Mucosa of descending colon (tissue), 3 donors: ENCODE measurements at regions of chr11 and their contacts with region 1.

Region 1: GRCh38 chr11:128172046-128172878 is 415.1 kb downstream of the ETS1 start:
- DNase-seq: peak; percentile 53 to 96 (median 80)
- ATAC-seq: peak; percentile 81
- H3K4me3 ChIP-seq: no peak overlapping the region
- H3K4me1 ChIP-seq: no peaks in the 10 kb centered on the region
- CTCF ChIP-seq: peak; percentile 42

Region 2: DNA sequence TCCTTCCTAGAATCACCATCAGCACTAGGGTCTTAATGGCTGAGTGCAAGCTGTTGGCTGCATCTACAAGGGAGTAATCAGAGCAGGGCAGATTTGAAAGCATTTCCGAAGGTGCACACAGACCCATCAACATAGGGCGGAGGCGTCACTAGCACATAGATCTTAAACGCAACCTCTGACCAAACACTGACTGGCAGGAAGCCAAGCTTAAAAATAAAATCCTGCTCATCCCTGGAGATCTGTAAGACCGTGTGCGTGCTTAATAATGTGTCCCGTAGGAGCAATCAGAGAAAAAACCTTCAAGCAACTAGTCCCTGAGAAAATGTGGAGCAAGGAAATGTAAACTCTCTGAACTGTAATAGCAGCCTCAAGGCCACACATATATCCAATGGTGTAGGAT is 55.4 kb before region 1 on chr11:
- intact Hi-C with region 1: no loop called
- DNase-seq: no peak
- ATAC-seq: no peak
- H3K4me3 ChIP-seq: no peak overlapping the region
- H3K4me1 ChIP-seq: no peaks in the 10 kb centered on the region
- CTCF ChIP-seq: no peak

Region 3: GRCh38 chr11:128269466-128269865 is 97.2 kb after region 1 on chr11:
- intact Hi-C with region 1: no loop called
- DNase-seq: no peak
- ATAC-seq: no peak
- H3K4me3 ChIP-seq: no peak overlapping the region
- H3K4me1 ChIP-seq: no peaks in the 10 kb centered on the region
- CTCF ChIP-seq: no peak

Region 4: DNA sequence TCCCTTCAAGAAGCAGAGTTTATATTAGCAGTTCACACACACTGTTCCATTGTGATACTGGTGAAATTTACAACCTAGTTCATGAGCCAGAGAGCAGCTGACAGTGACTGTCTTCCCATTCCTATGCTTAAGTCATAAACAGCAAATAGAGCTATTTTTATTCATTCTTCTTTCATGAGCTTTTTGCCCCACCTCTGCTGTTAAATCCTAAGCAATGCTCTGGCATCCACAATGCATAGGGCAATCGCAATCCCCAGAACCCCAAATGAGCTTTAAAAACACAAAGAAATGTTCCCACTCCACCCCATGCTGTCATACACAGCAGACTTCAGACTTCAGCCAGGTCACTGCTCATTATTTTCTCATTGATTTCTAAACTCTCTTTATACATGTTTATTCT is 107.6 kb after region 1 on chr11:
- intact Hi-C with region 1: loop called in 1 of 2 experiments (anchors 10 kb)
- DNase-seq: no peak
- ATAC-seq: peak; percentile 57
- H3K4me3 ChIP-seq: no peak overlapping the region
- H3K4me1 ChIP-seq: no peaks in the 10 kb centered on the region
- CTCF ChIP-seq: no peak

Region 5: DNA sequence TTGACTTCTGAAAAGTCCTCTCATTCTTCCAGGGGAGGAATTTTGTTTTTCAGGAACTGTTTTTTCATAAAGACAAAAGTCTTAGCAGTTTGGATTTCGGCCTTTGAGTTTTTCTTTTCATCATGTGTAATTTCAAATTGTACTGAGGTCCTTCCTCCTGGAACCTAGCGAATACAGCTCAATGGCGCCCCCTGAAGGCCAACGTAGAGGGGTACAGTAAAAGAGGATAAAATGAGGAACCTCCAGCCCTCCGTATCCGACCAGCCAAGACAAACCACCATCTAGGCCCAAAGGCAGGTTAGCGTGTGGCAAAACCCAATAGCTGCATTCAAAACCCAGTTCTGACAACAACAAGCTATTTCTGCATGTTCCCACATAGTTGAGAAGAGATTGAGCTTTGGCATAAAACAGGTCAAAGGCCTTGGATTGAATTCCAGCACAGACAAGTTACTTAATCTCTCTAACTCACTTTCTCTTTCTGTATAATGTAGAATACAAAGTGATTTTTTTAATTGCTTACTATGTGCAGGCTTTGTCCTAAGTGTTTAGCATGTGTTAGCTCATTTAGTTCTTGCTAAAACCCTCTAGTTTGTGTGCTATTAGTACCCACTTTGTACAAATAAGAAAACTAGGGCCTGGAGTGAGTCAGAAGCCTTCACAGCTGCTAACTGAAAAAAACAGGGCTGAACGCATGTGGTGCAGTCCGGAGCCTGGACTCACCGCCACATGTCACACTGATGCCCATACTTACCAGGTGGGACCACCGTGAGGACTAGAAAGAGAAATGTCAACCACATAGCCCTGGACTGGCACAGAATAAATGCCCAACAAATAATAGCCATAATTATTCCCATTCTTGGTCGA is 458.3 kb after region 1 on chr11:
- intact Hi-C with region 1: loop called (anchors 5 to 10 kb)
- DNase-seq: peak; percentile 88 to 93 (median 90)
- ATAC-seq: peak; percentile 93
- H3K4me3 ChIP-seq: no peak overlapping the region
- H3K4me1 ChIP-seq: peaks cover 13% of the 10 kb centered on the region
- CTCF ChIP-seq: peak; percentile 67